ENCODE measurements at regions of chr16 and their contacts with region 1.

Region 1: DNA sequence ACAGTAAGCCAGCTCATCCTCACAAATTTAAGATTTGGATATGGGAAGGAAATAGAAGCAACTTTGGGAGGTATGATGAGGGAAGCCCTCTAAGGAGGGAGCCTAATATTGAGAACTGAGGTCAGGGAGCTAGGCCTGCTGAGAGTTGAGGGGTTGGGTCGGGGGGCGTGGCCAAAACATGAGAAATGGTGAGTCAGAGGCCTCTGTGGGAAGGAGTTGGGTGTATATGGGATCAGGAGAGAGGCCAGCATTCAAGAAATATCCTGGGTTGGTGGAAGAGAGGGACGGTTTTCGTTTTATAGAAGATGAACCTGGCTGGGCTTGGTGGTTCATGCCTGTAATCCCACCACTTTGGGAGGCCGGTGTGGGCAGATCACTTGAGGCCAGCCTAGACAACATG is 48.4 kb downstream of the CLEC16A start:
- DNase-seq: peak; percentile 87
- H3K4me3 Mint-ChIP-seq: peak overlapping the region; percentile 31
- H3K27ac Mint-ChIP-seq: peak overlapping the region; percentile 90
- H3K4me1 Mint-ChIP-seq: peaks cover 51% of the 10 kb centered on the region
- H3K27me3 Mint-ChIP-seq: no peaks in the 10 kb centered on the region
- CTCF ChIP-seq: no peak

Region 2: DNA sequence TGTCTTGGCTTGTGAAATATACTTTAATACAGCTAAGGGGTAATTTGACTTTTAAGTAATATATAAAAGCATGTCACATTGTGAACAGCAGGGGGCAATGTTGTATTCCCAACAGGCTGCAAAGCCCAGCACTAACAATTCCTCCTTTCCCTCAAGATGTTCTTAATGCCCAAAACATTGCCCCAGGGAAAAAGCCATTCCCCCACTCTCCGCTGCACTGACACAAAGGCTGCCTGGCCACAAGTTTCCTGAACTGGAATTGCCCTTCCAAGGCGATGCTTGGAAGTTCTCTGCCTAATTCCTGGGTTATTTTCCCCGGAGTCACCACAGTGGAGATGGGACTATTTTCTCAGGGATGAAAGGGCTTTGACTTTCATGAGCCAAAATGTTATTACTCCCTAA is 21.2 kb before region 1 on chr16:
- CTCF ChIA-PET with region 1: no interaction called
- intact Hi-C with region 1: no loop called
- DNase-seq: peak; percentile 64
- H3K4me3 Mint-ChIP-seq: no peak overlapping the region
- H3K27ac Mint-ChIP-seq: no peak overlapping the region
- H3K4me1 Mint-ChIP-seq: peaks cover 12% of the 10 kb centered on the region
- H3K27me3 Mint-ChIP-seq: no peaks in the 10 kb centered on the region
- CTCF ChIP-seq: peak; percentile 83

Region 3: GRCh38 chr16:11016993-11017392 is 24.2 kb after region 1 on chr16:
- CTCF ChIA-PET with region 1: interaction called, 4 read pairs
- intact Hi-C with region 1: loop called (anchors 2 kb)
- DNase-seq: peak; percentile 84
- H3K4me3 Mint-ChIP-seq: no peak overlapping the region
- H3K27ac Mint-ChIP-seq: peak overlapping the region; percentile 42
- H3K4me1 Mint-ChIP-seq: peaks cover 27% of the 10 kb centered on the region
- H3K27me3 Mint-ChIP-seq: no peaks in the 10 kb centered on the region
- CTCF ChIP-seq: no peak

Region 4: DNA sequence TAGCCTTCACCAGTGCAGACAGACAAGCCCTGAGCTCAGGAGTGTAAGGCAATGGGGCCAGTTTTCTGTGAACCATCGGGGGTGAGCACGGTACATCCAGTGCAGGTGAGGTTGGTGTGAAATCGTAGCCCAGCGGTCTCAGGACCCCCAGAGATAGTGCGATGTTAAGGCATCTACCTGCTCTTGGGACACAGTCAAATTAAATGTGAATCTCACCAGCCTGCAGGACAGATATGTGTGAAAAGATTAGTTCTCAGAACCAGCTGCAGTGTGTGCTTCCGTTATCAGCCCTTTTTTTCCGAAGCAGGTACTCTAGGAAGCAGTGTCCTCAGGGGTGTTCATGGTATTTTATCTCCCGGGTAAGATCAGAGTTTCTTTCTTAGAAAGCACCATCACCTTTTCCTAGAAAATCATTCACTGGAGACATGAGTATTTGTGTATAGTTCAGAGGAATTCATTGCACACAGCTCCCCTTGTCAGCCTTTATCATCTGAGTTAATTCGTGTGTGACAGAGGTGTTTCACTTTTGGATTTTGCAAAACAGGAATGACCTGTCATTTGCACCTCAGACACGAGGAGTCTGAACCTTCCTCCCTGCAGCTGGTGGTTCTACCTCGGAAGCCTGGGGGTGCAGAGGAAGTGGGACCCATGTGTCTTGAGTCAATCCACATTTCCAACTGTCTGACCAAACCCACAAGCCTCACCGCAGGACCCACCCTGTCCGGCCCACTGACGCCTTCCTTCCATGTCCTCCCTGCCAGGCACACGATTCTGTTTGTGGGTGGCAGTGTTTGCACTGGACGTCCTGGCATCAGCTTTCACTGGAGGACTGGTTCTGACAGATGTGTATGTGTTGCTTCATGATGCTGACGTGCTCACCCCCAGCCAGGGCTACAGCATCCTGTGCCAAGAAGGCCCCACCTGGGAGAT is 59.3 kb after region 1 on chr16:
- CTCF ChIA-PET with region 1: no interaction called
- intact Hi-C with region 1: no loop called
- DNase-seq: no peak
- H3K4me3 Mint-ChIP-seq: no peak overlapping the region
- H3K27ac Mint-ChIP-seq: no peak overlapping the region
- H3K4me1 Mint-ChIP-seq: peaks cover 9% of the 10 kb centered on the region
- H3K27me3 Mint-ChIP-seq: no peaks in the 10 kb centered on the region
- CTCF ChIP-seq: no peak

Region 5: GRCh38 chr16:11198817-11199216 is 206.0 kb after region 1 on chr16:
- CTCF ChIA-PET with region 1: no interaction called
- intact Hi-C with region 1: loop called (anchors 1 kb)
- DNase-seq: peak; percentile 93
- H3K4me3 Mint-ChIP-seq: peak overlapping the region; percentile 36
- H3K27ac Mint-ChIP-seq: peak overlapping the region; percentile 78
- H3K4me1 Mint-ChIP-seq: peaks cover 44% of the 10 kb centered on the region
- H3K27me3 Mint-ChIP-seq: no peaks in the 10 kb centered on the region
- CTCF ChIP-seq: no peak

Measured in Calu3 (cell line).